MCF 10A (cell line): ENCODE measurements at regions of chr2 and their contacts with region 1.

Region 1: GRCh38 chr2:237280229-237280628 is 133.7 kb downstream of the COL6A3 start:
- DNase-seq: peak; percentile 54
- H3K4me3 Mint-ChIP-seq: no peak overlapping the region
- H3K27ac Mint-ChIP-seq: no peak overlapping the region
- H3K4me1 Mint-ChIP-seq: peaks cover 22% of the 10 kb centered on the region
- H3K27me3 Mint-ChIP-seq: no peaks in the 10 kb centered on the region
- CTCF ChIP-seq: no peak

Region 2: DNA sequence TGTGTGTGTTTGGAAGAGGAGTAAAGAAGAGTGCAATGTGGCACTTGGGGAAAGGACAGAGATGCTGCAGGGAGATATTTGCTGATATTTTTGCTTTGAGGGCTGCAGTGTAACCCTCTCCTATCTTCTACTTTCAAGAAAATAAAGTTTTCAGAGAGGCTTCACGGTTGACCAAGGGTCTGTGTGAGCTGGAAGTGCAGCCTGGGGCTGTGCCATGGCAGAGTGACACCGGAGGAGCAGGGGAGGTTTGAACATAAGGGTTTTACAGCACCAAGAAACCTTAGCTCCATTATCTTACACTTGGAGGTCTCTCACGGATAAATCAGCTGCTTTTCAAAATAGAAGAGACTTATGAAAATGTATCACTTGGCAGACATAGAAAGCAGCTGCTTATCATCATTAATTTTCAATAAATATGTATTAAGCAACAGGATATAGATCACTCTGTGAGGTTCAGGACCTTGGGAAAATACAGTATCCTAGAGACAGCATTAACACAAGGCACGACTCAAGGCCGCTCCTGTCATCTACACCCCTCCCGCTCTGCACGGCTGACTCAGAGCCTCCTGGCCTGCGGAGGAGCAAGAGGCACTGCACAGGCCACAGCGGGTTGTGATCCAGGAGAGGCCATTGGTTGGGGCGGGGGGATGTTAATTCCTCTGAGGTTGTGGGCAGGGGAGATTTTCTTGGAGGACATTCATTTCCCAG is 66.8 kb before region 1 on chr2:
- CTCF ChIA-PET with region 1: no interaction called
- POLR2A ChIA-PET with region 1: no interaction called
- intact Hi-C with region 1: no loop called
- DNase-seq: peak; percentile 28
- H3K4me3 Mint-ChIP-seq: no peak overlapping the region
- H3K27ac Mint-ChIP-seq: no peak overlapping the region
- H3K4me1 Mint-ChIP-seq: no peaks in the 10 kb centered on the region
- H3K27me3 Mint-ChIP-seq: no peaks in the 10 kb centered on the region
- CTCF ChIP-seq: no peak

Region 3: DNA sequence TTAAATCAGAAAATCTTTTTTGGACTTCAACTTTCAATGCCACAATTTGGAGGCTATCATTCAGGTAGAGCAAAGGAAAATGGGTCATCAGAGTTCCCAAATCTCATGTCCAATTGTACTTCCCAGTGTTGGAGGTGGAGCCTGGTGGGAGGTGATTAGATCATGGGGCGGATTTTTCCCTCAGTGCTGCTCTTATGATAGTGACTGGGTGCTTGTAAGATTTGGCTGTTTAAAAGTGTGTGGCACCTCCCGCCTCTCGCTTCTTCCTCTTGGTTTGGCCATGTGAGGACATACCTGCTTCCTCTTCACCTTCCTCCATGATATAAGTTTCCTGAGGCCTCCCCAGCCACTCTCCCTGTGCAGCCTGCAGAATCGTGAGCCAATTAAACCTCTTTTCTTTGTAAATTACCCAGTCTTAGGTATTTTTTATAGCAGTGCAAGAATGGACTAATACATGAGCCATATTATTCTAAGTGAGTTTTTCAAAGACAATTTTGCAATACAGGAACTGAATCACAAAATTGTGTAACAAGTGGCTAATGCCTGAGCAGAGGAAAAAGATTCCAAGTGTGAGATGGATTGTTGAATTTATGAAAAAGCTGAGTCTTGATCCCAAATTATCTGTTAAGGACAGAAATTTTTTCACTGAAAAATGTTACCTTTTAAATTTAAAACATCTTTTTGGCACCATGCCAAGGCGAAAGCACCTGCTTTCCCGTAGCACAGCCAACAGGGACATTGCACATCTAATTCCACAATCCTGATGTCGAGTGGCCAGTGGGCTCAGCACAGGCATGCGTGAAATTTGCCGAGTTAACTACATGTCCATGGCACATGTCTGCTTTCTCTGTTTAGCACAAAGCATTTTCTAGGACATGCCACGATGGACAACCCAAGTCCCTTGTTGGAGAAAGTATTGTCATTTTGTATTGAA is 17.1 kb before region 1 on chr2:
- CTCF ChIA-PET with region 1: interaction called, 4 read pairs
- POLR2A ChIA-PET with region 1: interaction called, 3 read pairs
- intact Hi-C with region 1: loop called (anchors 2 kb)
- DNase-seq: peak; percentile 87
- H3K4me3 Mint-ChIP-seq: peak overlapping the region; percentile 53
- H3K27ac Mint-ChIP-seq: peak overlapping the region; percentile 80
- H3K4me1 Mint-ChIP-seq: peaks cover 28% of the 10 kb centered on the region
- H3K27me3 Mint-ChIP-seq: no peaks in the 10 kb centered on the region
- CTCF ChIP-seq: no peak

Region 4: GRCh38 chr2:237306083-237306786 is 26.0 kb after region 1 on chr2:
- CTCF ChIA-PET with region 1: no interaction called
- POLR2A ChIA-PET with region 1: no interaction called
- intact Hi-C with region 1: no loop called
- DNase-seq: no peak
- H3K4me3 Mint-ChIP-seq: no peak overlapping the region
- H3K27ac Mint-ChIP-seq: peak overlapping the region; percentile 35
- H3K4me1 Mint-ChIP-seq: peaks cover 33% of the 10 kb centered on the region
- H3K27me3 Mint-ChIP-seq: no peaks in the 10 kb centered on the region
- CTCF ChIP-seq: no peak

Region 5: DNA sequence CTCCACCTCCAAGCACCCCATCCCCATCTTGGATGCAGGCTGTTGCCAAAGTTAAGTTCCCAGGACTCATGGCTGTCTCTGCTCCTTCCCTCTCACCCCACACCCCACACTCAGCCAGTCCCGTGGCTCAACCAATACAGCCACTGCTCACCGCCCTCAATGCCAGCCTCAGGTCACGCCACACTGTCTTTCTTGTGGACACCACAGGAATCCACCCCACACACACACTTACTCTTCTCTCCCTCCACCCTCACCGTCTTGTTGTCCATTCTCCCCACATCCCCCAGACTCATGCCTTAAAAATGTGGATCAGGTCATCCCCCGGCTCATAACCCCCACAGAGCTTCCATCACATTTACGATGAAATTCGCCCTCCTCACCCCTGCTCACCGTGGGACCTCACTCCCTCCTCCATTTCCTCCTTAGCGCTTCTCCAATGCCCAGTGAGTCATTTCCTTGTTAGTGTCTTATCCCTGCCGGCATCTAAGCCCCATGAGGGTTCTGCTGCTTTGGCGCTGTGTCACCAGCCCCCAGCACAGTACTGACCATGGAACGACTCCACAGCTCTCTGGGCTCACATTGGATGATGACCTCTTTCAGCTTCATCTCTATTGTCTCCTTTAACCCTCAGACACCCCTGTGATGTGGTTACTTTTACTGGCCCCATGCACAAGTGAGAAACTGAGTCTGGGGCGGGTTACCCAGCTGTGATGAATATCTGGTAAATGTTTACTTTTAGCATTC is 220.6 kb after region 1 on chr2:
- CTCF ChIA-PET with region 1: no interaction called
- POLR2A ChIA-PET with region 1: no interaction called
- intact Hi-C with region 1: no loop called
- DNase-seq: peak; percentile 89
- H3K4me3 Mint-ChIP-seq: peak overlapping the region; percentile 14
- H3K27ac Mint-ChIP-seq: peak overlapping the region; percentile 70
- H3K4me1 Mint-ChIP-seq: peaks cover 31% of the 10 kb centered on the region
- H3K27me3 Mint-ChIP-seq: no peaks in the 10 kb centered on the region
- CTCF ChIP-seq: no peak